BJ (cell line): ENCODE measurements at regions of chr13 and their contacts with region 1.

Region 1: DNA sequence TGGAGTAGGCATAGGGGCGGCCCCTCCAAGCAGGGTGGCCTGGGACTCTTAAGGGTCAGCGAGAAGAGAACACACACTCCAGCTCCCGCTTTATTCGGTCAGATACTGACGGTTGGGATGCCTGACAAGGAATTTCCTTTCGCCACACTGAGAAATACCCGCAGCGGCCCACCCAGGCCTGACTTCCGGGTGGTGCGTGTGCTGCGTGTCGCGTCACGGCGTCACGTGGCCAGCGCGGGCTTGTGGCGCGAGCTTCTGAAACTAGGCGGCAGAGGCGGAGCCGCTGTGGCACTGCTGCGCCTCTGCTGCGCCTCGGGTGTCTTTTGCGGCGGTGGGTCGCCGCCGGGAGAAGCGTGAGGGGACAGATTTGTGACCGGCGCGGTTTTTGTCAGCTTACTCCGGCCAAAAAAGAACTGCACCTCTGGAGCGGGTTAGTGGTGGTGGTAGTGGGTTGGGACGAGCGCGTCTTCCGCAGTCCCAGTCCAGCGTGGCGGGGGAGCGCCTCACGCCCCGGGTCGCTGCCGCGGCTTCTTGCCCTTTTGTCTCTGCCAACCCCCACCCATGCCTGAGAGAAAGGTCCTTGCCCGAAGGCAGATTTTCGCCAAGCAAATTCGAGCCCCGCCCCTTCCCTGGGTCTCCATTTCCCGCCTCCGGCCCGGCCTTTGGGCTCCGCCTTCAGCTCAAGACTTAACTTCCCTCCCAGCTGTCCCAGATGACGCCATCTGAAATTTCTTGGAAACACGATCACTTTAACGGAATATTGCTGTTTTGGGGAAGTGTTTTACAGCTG is at the starts of genes BRCA2 and ZAR1L:
- DNase-seq: peak; percentile 35
- H3K4me3 ChIP-seq: peak within 1 kb of the TSS; percentile 60
- H3K27me3 ChIP-seq: no peaks in the 10 kb centered on the region
- CTCF ChIP-seq: no peak
- polyA plus RNA-seq, gene BRCA2: 0.91 and 1.2 TPM in 2 replicates
- polyA plus RNA-seq, gene ZAR1L: not detected in 2 replicates

Region 2: GRCh38 chr13:32627793-32628192 is 312.4 kb after region 1 on chr13:
- CTCF ChIA-PET with region 1: no interaction called
- POLR2A ChIA-PET with region 1: interaction called, 17 read pairs
- DNase-seq: no peak
- H3K4me3 ChIP-seq: no peak overlapping the region
- H3K27me3 ChIP-seq: no peaks in the 10 kb centered on the region
- CTCF ChIP-seq: no peak